ENCODE measurements at regions of chr5 and their contacts with region 1.

Region 1: GRCh38 chr5:81345411-81346003 is 44.1 kb downstream of the ZCCHC9 start:
- DNase-seq: no peak
- ATAC-seq: no peak
- H3K4me3 ChIP-seq: no peak overlapping the region
- H3K4me3 Mint-ChIP-seq: no peak overlapping the region
- H3K27ac ChIP-seq: no peak overlapping the region
- H3K27ac Mint-ChIP-seq: no peak overlapping the region
- H3K4me1 ChIP-seq: no peaks in the 10 kb centered on the region
- H3K4me1 Mint-ChIP-seq: no peaks in the 10 kb centered on the region
- H3K27me3 ChIP-seq: no peaks in the 10 kb centered on the region
- H3K27me3 Mint-ChIP-seq: peaks cover 2% of the 10 kb centered on the region
- CTCF ChIP-seq: no peak

Region 2: DNA sequence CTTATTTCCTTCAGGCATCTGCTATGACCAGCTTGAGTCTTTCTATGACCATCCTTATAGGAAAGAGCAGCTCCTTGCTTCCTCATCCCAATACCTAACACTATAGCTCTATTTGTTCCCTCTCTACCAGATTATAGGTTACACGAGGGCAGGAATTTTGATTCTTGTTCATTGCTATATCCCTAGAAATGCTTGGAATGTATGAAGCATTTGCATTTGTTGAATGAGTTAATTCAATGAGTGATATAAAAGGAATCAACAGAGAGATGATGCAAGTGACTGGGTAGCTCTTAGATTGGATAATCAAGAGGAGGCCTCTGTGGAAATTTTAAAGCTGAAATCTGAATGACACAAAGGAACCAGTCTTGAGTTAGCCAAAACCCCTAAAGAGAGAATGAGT is 30.2 kb before region 1 on chr5:
- CTCF ChIA-PET with region 1: no interaction called
- POLR2A ChIA-PET with region 1: no interaction called
- intact Hi-C with region 1: loop called in 1 of 2 experiments (anchors 1 kb)
- DNase-seq: no peak
- ATAC-seq: no peak
- H3K4me3 ChIP-seq: no peak overlapping the region
- H3K4me3 Mint-ChIP-seq: no peak overlapping the region
- H3K27ac ChIP-seq: no peak overlapping the region
- H3K27ac Mint-ChIP-seq: no peak overlapping the region
- H3K4me1 ChIP-seq: no peaks in the 10 kb centered on the region
- H3K4me1 Mint-ChIP-seq: no peaks in the 10 kb centered on the region
- H3K27me3 ChIP-seq: no peaks in the 10 kb centered on the region
- H3K27me3 Mint-ChIP-seq: no peaks in the 10 kb centered on the region
- CTCF ChIP-seq: no peak